Sigmoid colon (tissue), 7 donors: ENCODE measurements at regions of chr4 and their contacts with region 1.

Region 1: DNA sequence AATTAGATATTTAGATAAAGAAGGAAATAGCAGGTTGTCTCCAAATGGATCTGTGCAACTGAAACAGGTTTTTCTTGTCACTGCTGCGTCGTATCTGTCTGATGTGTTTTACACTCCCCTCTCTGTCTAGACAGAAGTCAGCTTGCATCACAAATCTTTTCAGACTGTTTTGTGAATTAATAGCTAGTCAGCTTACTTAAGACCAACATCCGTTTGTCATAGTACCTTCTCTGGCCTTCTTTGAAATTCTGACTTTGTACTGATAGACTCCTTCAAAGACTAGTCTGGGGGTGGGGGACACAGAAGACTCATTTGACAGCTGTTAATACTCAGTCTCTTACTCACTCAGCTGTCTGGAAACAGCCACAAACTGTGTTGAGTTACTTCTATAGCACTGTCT is 197.8 kb downstream of the PALLD start:
- DNase-seq: no peak
- H3K4me3 ChIP-seq: no peak overlapping the region
- H3K27ac ChIP-seq: peak overlapping the region in 2 of 4 donors; percentile 3 to 32
- H3K4me1 ChIP-seq: peaks cover 0 to 4% (median 0%) of the 10 kb centered on the region in 4 donors
- H3K27me3 ChIP-seq: no peaks in the 10 kb centered on the region
- CTCF ChIP-seq: no peak
- EP300 ChIP-seq: no peak
- POLR2A ChIP-seq: no peak

Region 2: DNA sequence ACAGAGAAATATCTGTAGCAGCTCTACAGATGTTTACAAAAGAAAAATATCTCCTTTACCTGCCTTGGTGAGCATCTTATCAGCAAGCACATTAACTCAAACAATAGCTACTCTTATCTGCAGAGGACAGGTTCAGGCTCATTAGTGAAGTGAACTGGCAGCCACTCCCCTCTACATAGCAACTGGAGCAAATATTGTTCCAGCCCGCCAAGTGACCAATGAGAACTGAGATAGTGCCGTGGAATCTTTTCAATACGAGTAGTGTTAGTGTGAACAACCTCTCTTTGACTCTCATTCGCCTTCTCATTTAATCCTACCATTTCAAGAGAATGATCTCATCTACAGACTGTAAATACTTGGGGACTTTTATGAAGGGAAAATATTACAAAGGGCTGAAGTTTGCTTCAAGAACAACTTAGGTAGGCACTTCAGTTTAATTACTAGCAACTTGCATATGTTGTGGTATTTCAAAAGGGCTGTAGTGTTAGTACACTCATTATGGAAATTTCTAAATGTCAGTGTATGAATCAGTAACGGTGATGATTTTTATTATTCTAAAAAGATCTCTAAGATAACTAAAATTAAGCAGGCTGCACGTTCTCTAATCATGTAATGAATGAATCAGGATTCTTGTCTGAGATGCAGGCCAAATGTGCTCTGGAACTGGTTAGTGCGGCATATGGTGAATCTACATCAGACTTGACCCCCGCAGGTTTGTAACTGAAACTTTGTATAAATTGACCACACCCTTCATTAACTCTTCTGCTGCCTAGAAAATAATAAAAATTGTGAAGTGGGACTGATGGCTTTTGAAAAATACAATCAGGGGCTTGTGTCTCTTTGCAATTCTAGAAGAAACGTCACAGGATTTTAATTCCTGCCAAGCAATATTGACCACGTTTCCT is 125.3 kb before region 1 on chr4:
- intact Hi-C with region 1: no loop called
- DNase-seq: no peak
- H3K4me3 ChIP-seq: peak overlapping the region in 2 of 4 donors; percentile 19 to 23
- H3K27ac ChIP-seq: peak overlapping the region in 3 of 4 donors; percentile 42 to 64 (median 63)
- H3K4me1 ChIP-seq: peaks cover 0 to 24% (median 17%) of the 10 kb centered on the region in 4 donors
- H3K27me3 ChIP-seq: no peaks in the 10 kb centered on the region
- CTCF ChIP-seq: no peak
- EP300 ChIP-seq: no peak
- POLR2A ChIP-seq: no peak

Region 3: DNA sequence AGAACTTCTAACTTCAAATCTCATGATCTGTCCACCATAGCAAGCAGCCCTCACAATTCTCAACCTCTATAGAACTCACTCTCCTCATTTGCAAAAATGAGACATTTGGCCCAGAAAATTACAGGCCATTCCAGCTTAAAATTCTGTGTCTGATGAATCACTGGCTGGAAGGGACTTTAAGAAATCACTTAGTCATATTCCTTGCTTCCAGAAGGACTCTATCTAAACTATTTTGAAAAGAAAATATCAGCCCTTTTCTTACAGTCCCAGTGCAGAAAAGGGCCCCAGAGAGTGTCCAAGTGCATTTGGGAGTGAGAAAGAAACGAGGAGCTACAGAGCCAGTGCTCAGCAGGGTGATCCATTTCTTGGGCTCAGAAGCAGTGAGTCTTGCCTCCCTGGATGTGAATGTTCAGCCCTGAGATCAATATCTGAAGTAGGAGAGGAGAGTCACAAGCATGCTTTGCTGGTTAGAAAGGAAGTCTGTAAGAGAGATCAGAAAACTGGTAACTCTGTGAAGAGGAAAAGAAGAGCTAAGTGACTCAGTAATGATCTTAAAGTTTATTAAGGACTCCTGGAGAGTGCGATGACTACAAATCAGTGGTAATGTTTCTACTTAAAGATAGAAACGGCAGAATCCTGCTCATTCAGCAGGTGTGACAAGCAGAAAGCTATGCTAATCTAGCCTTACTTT is 58.0 kb before region 1 on chr4:
- intact Hi-C with region 1: loop called (anchors 5 kb)
- DNase-seq: no peak
- H3K4me3 ChIP-seq: no peak overlapping the region
- H3K27ac ChIP-seq: peak overlapping the region; percentile 44 to 93 (median 62)
- H3K4me1 ChIP-seq: peaks cover 0 to 52% (median 39%) of the 10 kb centered on the region in 4 donors
- H3K27me3 ChIP-seq: no peaks in the 10 kb centered on the region
- CTCF ChIP-seq: no peak
- EP300 ChIP-seq: no peak
- POLR2A ChIP-seq: no peak